T-cell (primary cell): ENCODE measurements at regions of chr2 and their contacts with region 1.

Region 1: DNA sequence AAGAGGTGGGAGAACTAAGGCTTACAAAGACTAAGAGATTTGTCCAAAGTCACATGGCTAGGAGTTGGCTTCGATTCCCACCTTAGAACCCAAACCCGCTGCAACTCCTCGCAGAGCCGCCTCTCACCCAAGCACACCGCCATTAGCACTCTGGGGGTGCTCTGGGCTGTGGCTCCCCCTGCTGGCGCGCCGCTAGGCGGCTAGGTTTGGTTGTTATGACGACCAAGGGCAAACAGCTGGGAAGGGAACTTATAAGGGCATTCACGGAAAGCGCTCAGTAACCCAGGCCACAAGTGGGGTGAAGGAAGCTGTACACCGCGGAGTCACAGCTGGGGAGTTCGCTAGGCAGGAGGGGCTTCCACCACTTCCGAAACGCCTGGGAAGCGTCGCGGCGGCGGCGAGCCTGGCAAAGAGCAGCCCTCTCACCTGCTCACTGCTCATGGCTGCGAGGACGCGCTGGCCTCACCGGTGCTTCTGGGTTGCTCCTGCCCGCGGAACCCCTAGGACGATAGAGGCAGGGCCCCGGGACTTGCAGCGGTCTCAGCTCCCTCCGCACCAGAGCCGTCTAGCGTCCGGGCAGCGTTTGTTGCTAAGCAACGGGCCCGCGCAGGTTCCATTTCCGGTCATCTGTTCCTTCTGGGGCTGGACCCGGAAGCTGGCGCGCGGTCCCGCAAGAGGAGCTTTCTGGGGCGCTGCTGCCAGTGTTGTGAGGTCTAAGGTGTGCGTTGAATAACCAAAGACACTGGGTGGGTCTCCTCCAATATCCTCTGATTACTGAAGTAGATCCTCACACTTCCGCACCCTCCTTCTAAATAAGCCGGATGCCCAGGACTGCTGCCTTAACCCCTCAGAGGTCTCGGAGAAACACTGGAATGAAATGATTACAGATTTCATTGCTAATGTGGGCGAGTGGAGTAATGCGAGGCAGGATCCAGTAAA is at the start of gene DNAH7:
- DNase-seq: peak; percentile 80 to 94 (median 92)
- ATAC-seq: peak; percentile 89 to 97 (median 93)
- H3K4me3 ChIP-seq: peak within 1 kb of the TSS; percentile 60 to 64
- H3K4me3 Mint-ChIP-seq: peak within 1 kb of the TSS; percentile 81 to 85 (median 82)
- H3K27ac ChIP-seq: peak within 1 kb of the TSS; percentile 51
- H3K27ac Mint-ChIP-seq: peak within 1 kb of the TSS; percentile 71 to 79
- H3K4me1 ChIP-seq: peaks cover 0 to 14% of the 10 kb centered on the region in 2 experiments
- H3K4me1 Mint-ChIP-seq: peaks cover 13 to 16% (median 14%) of the 10 kb centered on the region in 3 donors
- H3K27me3 ChIP-seq: peaks cover 0 to 4% of the 10 kb centered on the region in 2 experiments
- H3K27me3 Mint-ChIP-seq: peaks cover 0 to 4% of the 10 kb centered on the region in 2 donors
- total RNA-seq, gene DNAH7: 0.03 TPM in 1 of 5 donors, not detected in the others

Region 2: GRCh38 chr2:195664528-195664927 is 404.0 kb before region 1 on chr2:
- CTCF ChIA-PET with region 1: interaction called, 3 to 15 read pairs
- POLR2A ChIA-PET with region 1: interaction called in 1 of 2 experiments, 7 read pairs
- DNase-seq: no peak
- ATAC-seq: no peak
- H3K4me3 ChIP-seq: no peak overlapping the region
- H3K4me3 Mint-ChIP-seq: no peak overlapping the region
- H3K27ac ChIP-seq: no peak overlapping the region
- H3K27ac Mint-ChIP-seq: peak overlapping the region; percentile 70 to 75
- H3K4me1 ChIP-seq: peaks cover 18 to 21% of the 10 kb centered on the region in 2 experiments
- H3K4me1 Mint-ChIP-seq: peaks cover 58 to 72% (median 72%) of the 10 kb centered on the region in 3 donors
- H3K27me3 ChIP-seq: no peaks in the 10 kb centered on the region
- H3K27me3 Mint-ChIP-seq: no peaks in the 10 kb centered on the region

Region 3: DNA sequence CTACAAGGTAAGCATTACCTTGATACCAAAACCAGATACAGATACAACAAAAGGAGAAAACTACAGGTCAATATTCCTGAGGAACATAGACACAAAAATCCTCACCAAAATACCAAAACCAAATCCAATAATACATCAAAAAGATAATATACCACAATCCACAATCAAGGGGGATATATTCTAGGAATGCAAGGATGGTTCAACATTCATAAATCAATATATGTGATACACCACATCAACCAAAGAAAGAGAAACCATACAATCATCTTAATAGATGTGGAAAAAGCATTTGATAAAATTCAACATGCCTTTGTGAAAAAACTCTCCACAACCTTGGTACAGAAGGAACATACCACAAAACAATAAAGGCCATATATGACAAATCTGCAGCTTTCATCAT is 28.3 kb before region 1 on chr2:
- CTCF ChIA-PET with region 1: no interaction called
- POLR2A ChIA-PET with region 1: no interaction called
- DNase-seq: no peak
- ATAC-seq: no peak
- H3K4me3 ChIP-seq: no peak overlapping the region
- H3K4me3 Mint-ChIP-seq: no peak overlapping the region
- H3K27ac ChIP-seq: no peak overlapping the region
- H3K27ac Mint-ChIP-seq: no peak overlapping the region
- H3K4me1 ChIP-seq: no peaks in the 10 kb centered on the region
- H3K4me1 Mint-ChIP-seq: no peaks in the 10 kb centered on the region
- H3K27me3 ChIP-seq: peaks cover 0 to 10% of the 10 kb centered on the region in 2 experiments
- H3K27me3 Mint-ChIP-seq: peaks cover 14 to 21% of the 10 kb centered on the region in 2 donors

Region 4: GRCh38 chr2:196337208-196337953 is 268.8 kb after region 1 on chr2:
- CTCF ChIA-PET with region 1: interaction called in 1 of 2 experiments, 14 read pairs
- POLR2A ChIA-PET with region 1: no interaction called
- DNase-seq: peak in 12 of 35 experiments; percentile 1 to 60 (median 8)
- ATAC-seq: peak in 2 of 4 experiments; percentile 20 to 32
- H3K4me3 ChIP-seq: no peak overlapping the region
- H3K4me3 Mint-ChIP-seq: no peak overlapping the region
- H3K27ac ChIP-seq: no peak overlapping the region
- H3K27ac Mint-ChIP-seq: no peak overlapping the region
- H3K4me1 ChIP-seq: no peaks in the 10 kb centered on the region
- H3K4me1 Mint-ChIP-seq: peaks cover 0 to 6% (median 3%) of the 10 kb centered on the region in 3 donors
- H3K27me3 ChIP-seq: no peaks in the 10 kb centered on the region
- H3K27me3 Mint-ChIP-seq: peaks cover 0 to 5% of the 10 kb centered on the region in 2 donors